Activated T-helper 1 cell treated with anti-CD3 and anti-CD28 coated beads, Interleukin-12 subunit alpha, Interleukin-12 subunit beta, Interleukin-2, Interleukin-4 antibody, amounts not matched to agents 30 ng/mL and 10 ng/mL and 1 ng/mL, durations not matched to agents 14 hours and 24 hours and 36 hours (primary cell): ENCODE measurements at regions of chr19 and their contacts with region 1.

Region 1: GRCh38 chr19:9834726-9835506 is at the start of gene PIN1:
- DNase-seq: peak; percentile 99
- H3K4me3 Mint-ChIP-seq: peak within 1 kb of the TSS; percentile 97
- H3K27ac Mint-ChIP-seq: peak within 1 kb of the TSS; percentile 90
- H3K4me1 Mint-ChIP-seq: peaks cover 10% of the 10 kb centered on the region
- H3K27me3 Mint-ChIP-seq: no peaks in the 10 kb centered on the region
- total RNA-seq, gene PIN1: 86.4 and 87.3 TPM in 2 replicates

Region 2: GRCh38 chr19:9818734-9819589 is 16.0 kb before region 1 on chr19 and contains the start of gene FBXL12:
- intact Hi-C with region 1: loop called (anchors 1 kb)
- DNase-seq: peak; percentile 100
- H3K4me3 Mint-ChIP-seq: peak within 1 kb of the TSS; percentile 90
- H3K27ac Mint-ChIP-seq: peak within 1 kb of the TSS; percentile 87
- H3K4me1 Mint-ChIP-seq: peaks cover 27% of the 10 kb centered on the region
- H3K27me3 Mint-ChIP-seq: no peaks in the 10 kb centered on the region
- total RNA-seq, gene FBXL12: 19.4 and 20.7 TPM in 2 replicates

Region 3: DNA sequence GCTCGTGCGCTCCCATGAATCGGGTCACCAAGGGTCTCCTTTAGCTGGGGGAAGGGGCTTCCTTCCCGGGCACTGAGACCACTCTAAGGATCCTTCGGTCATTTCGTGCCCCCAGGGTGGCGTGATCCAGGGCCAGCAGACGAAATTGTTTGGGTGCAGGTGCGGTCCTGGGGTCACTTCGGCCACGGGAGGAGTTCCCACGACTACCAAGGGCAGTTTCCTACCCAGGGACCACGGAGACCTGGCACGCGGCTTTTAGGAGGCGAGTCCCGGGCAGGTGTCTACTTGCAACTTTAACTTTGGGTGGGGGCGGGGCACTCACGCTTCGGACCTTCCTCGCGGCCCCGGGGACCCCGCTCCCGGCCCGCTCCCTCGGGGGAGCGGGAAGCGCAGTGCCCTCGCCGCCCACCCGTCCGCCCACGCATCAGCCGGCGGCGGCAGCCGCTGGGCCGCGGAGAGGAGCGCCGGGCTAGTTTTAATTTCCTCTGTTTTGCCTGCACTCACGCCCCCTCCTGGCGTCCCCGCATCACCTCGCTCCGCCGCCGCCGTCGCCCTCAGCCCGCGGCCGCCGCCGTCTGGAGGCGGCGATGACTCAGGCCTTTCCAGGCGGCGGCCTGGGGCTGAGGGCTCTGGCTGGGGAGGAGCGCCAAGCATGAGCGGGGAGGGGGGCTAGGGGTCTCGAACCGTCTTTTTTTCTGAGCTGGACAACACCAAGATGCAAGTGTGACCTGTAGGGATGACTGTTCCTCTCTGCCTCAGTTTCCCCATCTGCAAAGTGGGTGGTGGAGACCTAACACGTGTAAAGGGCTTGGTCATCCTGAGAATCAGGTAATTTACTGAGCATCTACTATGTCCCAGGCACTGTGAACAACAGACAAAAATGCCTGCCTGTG is 79.6 kb after region 1 on chr19:
- intact Hi-C with region 1: loop called (anchors 2 kb)
- DNase-seq: peak; percentile 69
- H3K4me3 Mint-ChIP-seq: peak overlapping the region; percentile 52
- H3K27ac Mint-ChIP-seq: no peak overlapping the region
- H3K4me1 Mint-ChIP-seq: peaks cover 17% of the 10 kb centered on the region
- H3K27me3 Mint-ChIP-seq: peaks cover 21% of the 10 kb centered on the region